Natural killer cell (primary cell): ENCODE measurements at regions of chr20 and their contacts with region 1.

Region 1: DNA sequence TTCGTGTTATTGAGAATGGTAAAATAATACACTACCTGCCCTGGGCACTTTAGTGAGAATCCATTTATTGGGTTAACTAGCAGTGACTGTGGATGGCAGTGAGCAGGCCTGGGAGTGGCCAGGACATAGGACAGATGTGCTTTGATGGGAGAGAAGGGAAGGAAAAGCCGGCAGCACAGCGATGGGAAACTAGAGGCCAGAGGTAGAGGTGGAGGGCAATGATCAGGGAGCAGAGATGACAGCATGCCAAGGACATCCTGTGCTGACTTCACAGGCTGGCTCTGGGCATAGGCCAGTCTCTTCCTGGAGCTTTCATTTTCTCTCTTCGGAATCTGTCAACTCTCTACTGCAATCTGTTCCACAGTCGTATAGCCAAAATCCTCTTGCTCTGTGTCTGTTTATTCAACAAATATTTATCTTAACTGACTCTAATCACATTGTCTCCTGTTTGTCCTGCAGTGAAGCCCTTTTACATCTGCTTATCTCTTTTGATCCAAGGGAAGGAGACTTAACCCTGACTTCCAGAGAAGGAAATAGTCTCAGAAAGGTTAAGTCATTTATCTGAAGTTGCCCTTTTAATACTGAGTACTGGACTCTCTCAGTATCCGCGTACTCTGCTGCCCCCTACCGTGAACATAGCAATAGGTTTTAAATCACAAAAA is 18.4 kb upstream of the MMP24 start:
- DNase-seq: peak; percentile 70 to 87
- ATAC-seq: peak; percentile 92 to 96 (median 96)
- H3K4me3 ChIP-seq: no peak overlapping the region
- H3K4me3 Mint-ChIP-seq: no peak overlapping the region
- H3K27ac ChIP-seq: no peak overlapping the region
- H3K27ac Mint-ChIP-seq: no peak overlapping the region
- H3K4me1 ChIP-seq: no peaks in the 10 kb centered on the region
- H3K4me1 Mint-ChIP-seq: no peaks in the 10 kb centered on the region
- H3K27me3 ChIP-seq: no peaks in the 10 kb centered on the region
- H3K27me3 Mint-ChIP-seq: no peaks in the 10 kb centered on the region
- CTCF ChIP-seq: peak; percentile 96

Region 2: DNA sequence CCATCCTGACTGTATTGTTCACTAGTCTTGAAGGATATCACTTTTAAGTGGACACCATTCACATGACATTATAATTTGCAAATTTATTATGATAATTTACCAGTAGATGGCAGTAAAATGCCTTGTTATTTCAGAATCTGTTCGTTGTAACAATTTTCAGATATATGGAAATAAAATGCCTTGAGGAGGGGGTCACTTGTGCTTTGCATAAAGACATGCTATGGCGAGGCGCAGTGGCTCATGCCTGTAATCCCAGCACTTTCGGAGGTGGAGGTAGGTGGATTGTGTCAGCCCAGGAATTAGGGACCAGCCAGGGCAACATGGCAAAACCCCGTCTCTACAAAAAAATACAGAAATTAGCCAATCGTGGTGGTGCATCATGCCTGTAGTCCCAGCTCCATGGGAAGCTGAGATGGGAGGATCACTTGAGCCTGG is 373.6 kb before region 1 on chr20:
- intact Hi-C with region 1: loop called (anchors 1 kb)
- DNase-seq: peak in 1 of 2 donors; percentile 63
- ATAC-seq: peak in 1 of 3 donors; percentile 63
- H3K4me3 ChIP-seq: no peak overlapping the region
- H3K4me3 Mint-ChIP-seq: no peak overlapping the region
- H3K27ac ChIP-seq: no peak overlapping the region
- H3K27ac Mint-ChIP-seq: no peak overlapping the region
- H3K4me1 ChIP-seq: no peaks in the 10 kb centered on the region
- H3K4me1 Mint-ChIP-seq: peaks cover 0 to 6% of the 10 kb centered on the region in 2 donors
- H3K27me3 ChIP-seq: no peaks in the 10 kb centered on the region
- H3K27me3 Mint-ChIP-seq: peaks cover 21 to 25% of the 10 kb centered on the region in 2 donors
- CTCF ChIP-seq: peak; percentile 65

Region 3: GRCh38 chr20:35092524-35093266 is 115.4 kb before region 1 on chr20 and contains the start of gene TRPC4AP:
- intact Hi-C with region 1: loop called (anchors 1 kb)
- DNase-seq: peak; percentile 87 to 95
- ATAC-seq: peak; percentile 94 to 99 (median 96)
- H3K4me3 ChIP-seq: peak within 1 kb of the TSS; percentile 95
- H3K4me3 Mint-ChIP-seq: peak within 1 kb of the TSS; percentile 96
- H3K27ac ChIP-seq: peak within 1 kb of the TSS; percentile 75
- H3K27ac Mint-ChIP-seq: peak within 1 kb of the TSS; percentile 82 to 89
- H3K4me1 ChIP-seq: peaks cover 24% of the 10 kb centered on the region
- H3K4me1 Mint-ChIP-seq: peaks cover 37 to 41% of the 10 kb centered on the region in 2 donors
- H3K27me3 ChIP-seq: no peaks in the 10 kb centered on the region
- H3K27me3 Mint-ChIP-seq: no peaks in the 10 kb centered on the region
- CTCF ChIP-seq: peak; percentile 95
- total RNA-seq, gene TRPC4AP: 72.3 to 79.0 (median 74.4) TPM

Region 4: DNA sequence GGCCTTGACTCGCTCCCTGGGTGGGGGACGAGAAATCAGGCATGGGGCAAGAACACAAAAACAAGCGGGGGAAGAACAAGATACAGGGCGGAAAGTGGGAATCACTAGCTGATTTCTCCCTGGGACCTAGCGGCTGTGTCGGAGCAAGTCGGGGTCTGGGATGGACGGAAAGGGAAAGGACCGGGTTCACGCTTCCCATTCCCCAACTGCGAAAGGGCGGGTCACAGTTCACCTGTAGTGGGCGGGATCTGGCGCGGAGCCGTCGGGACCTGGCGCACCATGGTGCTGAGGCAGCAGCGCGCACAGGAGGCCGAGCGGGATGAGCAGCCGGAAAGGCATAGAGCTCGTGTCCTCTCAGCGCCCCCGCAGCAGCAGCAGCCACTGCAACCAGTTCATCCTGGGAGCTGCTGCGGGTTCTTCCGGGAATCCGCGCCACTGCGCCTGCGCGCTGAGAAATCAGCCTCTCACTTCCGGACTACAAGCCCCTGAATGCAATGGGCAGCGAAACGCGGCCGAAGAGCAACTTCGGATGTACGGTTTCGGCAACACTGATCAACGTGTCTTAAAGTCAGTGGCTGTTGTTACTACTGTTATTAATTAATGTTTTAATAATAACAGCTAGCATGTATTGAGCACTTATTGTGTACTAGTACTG is 61.0 kb before region 1 on chr20 and contains the start of gene EDEM2:
- intact Hi-C with region 1: loop called (anchors 1 kb)
- DNase-seq: peak; percentile 89 to 98
- ATAC-seq: peak; percentile 88 to 94 (median 91)
- H3K4me3 ChIP-seq: peak within 1 kb of the TSS; percentile 68
- H3K4me3 Mint-ChIP-seq: peak within 1 kb of the TSS; percentile 93
- H3K27ac ChIP-seq: peak within 1 kb of the TSS; percentile 46
- H3K27ac Mint-ChIP-seq: peak within 1 kb of the TSS; percentile 93 to 94
- H3K4me1 ChIP-seq: peaks cover 21% of the 10 kb centered on the region
- H3K4me1 Mint-ChIP-seq: peaks cover 22 to 36% of the 10 kb centered on the region in 2 donors
- H3K27me3 ChIP-seq: no peaks in the 10 kb centered on the region
- H3K27me3 Mint-ChIP-seq: no peaks in the 10 kb centered on the region
- CTCF ChIP-seq: no peak
- total RNA-seq, gene EDEM2: 20.0 to 27.4 (median 25.3) TPM

Region 5: GRCh38 chr20:35269055-35269781 is 61.1 kb after region 1 on chr20:
- intact Hi-C with region 1: loop called (anchors 1 kb)
- DNase-seq: peak; percentile 48 to 73
- ATAC-seq: peak; percentile 64 to 87 (median 83)
- H3K4me3 ChIP-seq: no peak overlapping the region
- H3K4me3 Mint-ChIP-seq: no peak overlapping the region
- H3K27ac ChIP-seq: no peak overlapping the region
- H3K27ac Mint-ChIP-seq: no peak overlapping the region
- H3K4me1 ChIP-seq: no peaks in the 10 kb centered on the region
- H3K4me1 Mint-ChIP-seq: peaks cover 4 to 6% of the 10 kb centered on the region in 2 donors
- H3K27me3 ChIP-seq: no peaks in the 10 kb centered on the region
- H3K27me3 Mint-ChIP-seq: no peaks in the 10 kb centered on the region
- CTCF ChIP-seq: peak; percentile 68